ENCODE measurements at regions of chr17 and their contacts with region 1.

Region 1: GRCh38 chr17:39450847-39451581 is at the start of gene MED1:
- DNase-seq: peak; percentile 97 to 100 (median 98)
- H3K4me3 ChIP-seq: peak within 1 kb of the TSS; percentile 80 to 97 (median 88)
- H3K4me3 Mint-ChIP-seq: peak within 1 kb of the TSS; percentile 92 to 95
- H3K27ac ChIP-seq: peak within 1 kb of the TSS; percentile 82 to 89
- H3K27ac Mint-ChIP-seq: peak within 1 kb of the TSS; percentile 92 to 97 (median 95)
- H3K4me1 ChIP-seq: peaks cover 12 to 16% of the 10 kb centered on the region in 2 donors
- H3K4me1 Mint-ChIP-seq: peaks cover 15% of the 10 kb centered on the region
- H3K27me3 ChIP-seq: no peaks in the 10 kb centered on the region
- H3K27me3 Mint-ChIP-seq: peaks cover 0 to 2% (median 0%) of the 10 kb centered on the region in 3 donors
- CTCF ChIP-seq: no peak
- polyA plus RNA-seq, gene MED1: 5.0 to 9.1 (median 7.6) TPM

Region 2: DNA sequence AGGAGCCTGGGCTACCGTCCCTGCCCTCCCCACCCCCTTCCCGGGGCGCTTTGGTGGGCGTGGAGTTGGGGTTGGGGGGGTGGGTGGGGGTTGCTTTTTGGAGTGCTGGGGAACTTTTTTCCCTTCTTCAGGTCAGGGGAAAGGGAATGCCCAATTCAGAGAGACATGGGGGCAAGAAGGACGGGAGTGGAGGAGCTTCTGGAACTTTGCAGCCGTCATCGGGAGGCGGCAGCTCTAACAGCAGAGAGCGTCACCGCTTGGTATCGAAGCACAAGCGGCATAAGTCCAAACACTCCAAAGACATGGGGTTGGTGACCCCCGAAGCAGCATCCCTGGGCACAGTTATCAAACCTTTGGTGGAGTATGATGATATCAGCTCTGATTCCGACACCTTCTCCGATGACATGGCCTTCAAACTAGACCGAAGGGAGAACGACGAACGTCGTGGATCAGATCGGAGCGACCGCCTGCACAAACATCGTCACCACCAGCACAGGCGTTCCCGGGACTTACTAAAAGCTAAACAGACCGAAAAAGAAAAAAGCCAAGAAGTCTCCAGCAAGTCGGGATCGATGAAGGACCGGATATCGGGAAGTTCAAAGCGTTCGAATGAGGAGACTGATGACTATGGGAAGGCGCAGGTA is 11.0 kb after region 1 on chr17:
- intact Hi-C with region 1: loop called in 1 of 2 experiments (anchors 2 kb)
- DNase-seq: peak; percentile 19 to 40 (median 25)
- H3K4me3 ChIP-seq: peak overlapping the region; percentile 82 to 97 (median 84)
- H3K4me3 Mint-ChIP-seq: peak overlapping the region; percentile 96 to 100
- H3K27ac ChIP-seq: peak overlapping the region; percentile 97 to 98
- H3K27ac Mint-ChIP-seq: peak overlapping the region; percentile 97 to 100 (median 99)
- H3K4me1 ChIP-seq: peaks cover 24 to 34% of the 10 kb centered on the region in 2 donors
- H3K4me1 Mint-ChIP-seq: peaks cover 37% of the 10 kb centered on the region
- H3K27me3 ChIP-seq: no peaks in the 10 kb centered on the region
- H3K27me3 Mint-ChIP-seq: peaks cover 0 to 2% (median 1%) of the 10 kb centered on the region in 3 donors
- CTCF ChIP-seq: no peak